PC-9 (cell line): ENCODE measurements at regions of chr3 and their contacts with region 1.

Region 1: GRCh38 chr3:72665701-72666443 is 182.4 kb downstream of the SHQ1 start:
- DNase-seq: peak in 1 of 2 experiments; percentile 44
- H3K4me3 ChIP-seq: no peak overlapping the region
- H3K27ac ChIP-seq: no peak overlapping the region
- H3K4me1 ChIP-seq: peaks cover under 1% of the 10 kb centered on the region
- H3K27me3 ChIP-seq: no peaks in the 10 kb centered on the region
- CTCF ChIP-seq: peak; percentile 66

Region 2: GRCh38 chr3:72447059-72447946 is 218.6 kb before region 1 on chr3:
- CTCF ChIA-PET with region 1: no interaction called
- POLR2A ChIA-PET with region 1: no interaction called
- intact Hi-C with region 1: loop called (anchors 2 kb)
- DNase-seq: peak; percentile 50 to 93
- H3K4me3 ChIP-seq: peak overlapping the region; percentile 66
- H3K27ac ChIP-seq: peak overlapping the region; percentile 61; the same call in 1 of the 2 replicates
- H3K4me1 ChIP-seq: peaks cover 23% of the 10 kb centered on the region
- H3K27me3 ChIP-seq: no peaks in the 10 kb centered on the region
- CTCF ChIP-seq: no peak

Region 3: GRCh38 chr3:72591522-72592421 is 74.1 kb before region 1 on chr3:
- CTCF ChIA-PET with region 1: no interaction called
- POLR2A ChIA-PET with region 1: no interaction called
- intact Hi-C with region 1: loop called (anchors 2 kb)
- DNase-seq: peak; percentile 81 to 82
- H3K4me3 ChIP-seq: no peak overlapping the region
- H3K27ac ChIP-seq: peak overlapping the region; percentile 74
- H3K4me1 ChIP-seq: peaks cover 18% of the 10 kb centered on the region
- H3K27me3 ChIP-seq: no peaks in the 10 kb centered on the region
- CTCF ChIP-seq: no peak

Region 4: DNA sequence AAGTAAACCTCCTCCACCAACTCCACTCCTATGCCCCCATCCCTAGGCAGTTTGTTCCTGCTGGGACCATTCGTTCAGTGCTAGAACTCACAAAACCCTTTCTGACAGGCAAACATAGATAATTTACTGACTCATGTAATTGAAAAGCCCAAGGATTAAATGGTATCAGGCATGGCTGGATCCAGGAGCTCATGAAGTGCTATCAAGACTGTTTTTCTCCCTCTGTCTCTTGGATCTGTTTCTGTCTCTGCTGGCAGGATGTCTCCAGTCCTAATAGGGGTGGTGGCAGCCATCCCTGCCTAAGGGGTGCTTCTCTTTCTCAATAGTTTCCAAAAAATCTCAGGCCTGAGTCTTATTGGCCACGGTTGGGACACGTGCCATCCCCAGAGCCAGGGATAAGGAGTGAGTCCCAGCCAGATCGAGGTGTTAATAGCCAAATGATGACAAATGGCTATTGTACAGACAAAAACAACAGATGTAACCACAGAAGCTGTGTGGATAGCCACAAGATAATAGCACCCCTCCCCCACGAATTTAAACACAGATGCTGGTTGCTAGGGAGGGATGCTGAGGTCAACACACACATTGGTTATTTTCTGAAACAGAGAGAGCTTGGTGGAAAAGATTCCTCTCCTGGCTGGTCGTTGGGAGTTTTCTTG is 13.8 kb after region 1 on chr3:
- CTCF ChIA-PET with region 1: no interaction called
- POLR2A ChIA-PET with region 1: no interaction called
- intact Hi-C with region 1: no loop called
- DNase-seq: no peak
- H3K4me3 ChIP-seq: no peak overlapping the region
- H3K27ac ChIP-seq: no peak overlapping the region
- H3K4me1 ChIP-seq: peaks cover 5% of the 10 kb centered on the region; the same call in 1 of the 2 replicates
- H3K27me3 ChIP-seq: no peaks in the 10 kb centered on the region
- CTCF ChIP-seq: no peak

Region 5: DNA sequence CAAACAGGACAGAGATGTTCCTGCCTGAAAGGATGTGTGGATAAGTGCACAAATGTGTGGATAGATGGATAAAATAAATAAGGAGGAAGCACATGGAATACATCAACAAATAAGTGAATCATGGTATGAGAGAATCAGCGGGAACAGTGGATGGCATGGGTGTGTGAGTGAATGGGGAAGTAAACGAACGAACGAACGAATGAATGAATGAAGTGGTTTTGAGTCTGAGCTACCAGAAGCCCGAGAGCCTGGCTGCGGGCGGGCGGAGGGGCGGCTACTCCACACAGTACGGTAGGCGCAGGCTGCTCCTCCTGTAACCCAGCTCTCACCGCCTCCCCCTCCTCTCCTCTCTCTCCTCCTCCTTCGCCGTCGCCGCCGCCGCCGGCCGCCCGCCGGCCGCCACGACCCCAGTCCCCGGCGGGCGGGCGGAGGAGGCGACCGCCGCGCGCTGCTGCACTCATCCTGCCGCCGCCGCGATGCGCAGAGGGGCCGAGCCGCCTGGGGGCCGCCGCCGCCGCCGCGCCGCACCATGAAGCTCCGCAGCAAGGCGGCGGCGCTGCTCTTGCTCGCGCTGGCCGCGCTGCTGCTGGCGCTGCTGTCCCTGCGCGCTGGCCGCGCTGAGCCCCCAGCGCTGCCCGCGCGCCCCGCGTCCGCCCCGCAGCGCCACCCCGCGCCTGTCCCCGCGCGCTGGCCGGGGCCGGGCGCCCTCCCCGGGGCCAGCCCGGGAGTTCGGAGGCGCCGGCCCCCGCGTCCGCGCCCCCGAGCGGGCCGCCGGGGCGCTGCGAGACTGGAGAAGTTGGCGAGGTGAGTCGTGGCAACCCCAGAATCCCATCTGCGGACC is 222.1 kb after region 1 on chr3 and contains the start of gene GXYLT2:
- CTCF ChIA-PET with region 1: interaction called, 18 read pairs
- POLR2A ChIA-PET with region 1: no interaction called
- intact Hi-C with region 1: no loop called
- DNase-seq: peak in 1 of 2 experiments; percentile 44
- H3K4me3 ChIP-seq: peak within 1 kb of the TSS; percentile 68
- H3K27ac ChIP-seq: no peak within 1 kb of the TSS
- H3K4me1 ChIP-seq: peaks cover 37% of the 10 kb centered on the region
- H3K27me3 ChIP-seq: no peaks in the 10 kb centered on the region
- CTCF ChIP-seq: no peak
- total RNA-seq, gene GXYLT2: 1.7 and 2.9 TPM in 2 replicates